WTC11 (cell line): ENCODE measurements at regions of chr19 and their contacts with region 1.

Region 1: GRCh38 chr19:47391510-47392223 is 27.7 kb downstream of the MEIS3 start:
- DNase-seq: peak; percentile 91
- ATAC-seq: peak; percentile 99
- H3K4me3 Mint-ChIP-seq: 0 out of 2 replicates have a peak overlapping the region, but pooled peaks have one; percentile 21
- H3K27ac Mint-ChIP-seq: peak overlapping the region; percentile 58
- H3K4me1 Mint-ChIP-seq: peaks cover 22% of the 10 kb centered on the region
- H3K27me3 Mint-ChIP-seq: peaks cover 14% of the 10 kb centered on the region
- CTCF ChIP-seq: peak; percentile 92

Region 2: DNA sequence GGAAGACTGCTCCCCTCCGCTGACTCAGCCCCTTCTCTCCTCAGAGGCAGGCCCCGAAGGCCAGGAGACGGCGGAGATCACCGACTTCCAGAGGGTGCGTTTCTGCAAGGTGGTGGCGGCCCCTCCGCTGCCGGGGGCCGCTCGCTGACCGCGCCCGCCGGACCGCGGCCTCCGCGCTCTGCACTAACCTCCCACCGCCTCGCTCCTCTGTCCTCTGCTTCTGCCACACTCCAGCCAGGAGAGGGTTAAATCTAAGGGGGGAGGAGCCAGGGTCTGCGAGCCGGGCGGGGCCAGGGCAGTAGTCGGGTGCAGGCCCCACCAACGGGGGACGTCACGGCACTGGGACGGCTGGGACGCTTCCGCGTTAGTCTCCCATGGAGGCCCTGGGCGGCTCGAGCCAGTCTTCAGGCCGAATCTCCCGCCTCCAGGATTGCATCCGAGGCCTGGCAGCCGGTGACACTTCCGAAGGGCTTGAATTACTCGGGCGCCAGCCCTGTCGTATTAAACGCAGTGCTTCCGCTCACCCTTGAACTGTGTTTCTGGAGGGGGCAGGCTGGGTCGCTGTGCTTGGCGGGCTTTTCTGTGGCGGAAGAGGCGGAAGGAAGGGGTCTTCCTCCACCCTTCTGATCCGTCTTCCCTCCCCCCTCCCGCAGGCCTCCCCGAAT is 118.2 kb before region 1 on chr19:
- CTCF ChIA-PET with region 1: interaction called, 19 read pairs
- POLR2A ChIA-PET with region 1: no interaction called
- DNase-seq: peak; percentile 93
- ATAC-seq: peak; percentile 63
- H3K4me3 Mint-ChIP-seq: peak overlapping the region; percentile 91
- H3K27ac Mint-ChIP-seq: peak overlapping the region; percentile 99
- H3K4me1 Mint-ChIP-seq: peaks cover 16% of the 10 kb centered on the region
- H3K27me3 Mint-ChIP-seq: peaks cover 18% of the 10 kb centered on the region
- CTCF ChIP-seq: no peak

Region 3: GRCh38 chr19:47296036-47296435 is 95.6 kb before region 1 on chr19:
- CTCF ChIA-PET with region 1: interaction called, 22 read pairs
- POLR2A ChIA-PET with region 1: no interaction called
- DNase-seq: peak; percentile 88
- ATAC-seq: peak; percentile 97
- H3K4me3 Mint-ChIP-seq: no peak overlapping the region
- H3K27ac Mint-ChIP-seq: no peak overlapping the region
- H3K4me1 Mint-ChIP-seq: peaks cover 7% of the 10 kb centered on the region
- H3K27me3 Mint-ChIP-seq: no peaks in the 10 kb centered on the region
- CTCF ChIP-seq: peak; percentile 80

Region 4: DNA sequence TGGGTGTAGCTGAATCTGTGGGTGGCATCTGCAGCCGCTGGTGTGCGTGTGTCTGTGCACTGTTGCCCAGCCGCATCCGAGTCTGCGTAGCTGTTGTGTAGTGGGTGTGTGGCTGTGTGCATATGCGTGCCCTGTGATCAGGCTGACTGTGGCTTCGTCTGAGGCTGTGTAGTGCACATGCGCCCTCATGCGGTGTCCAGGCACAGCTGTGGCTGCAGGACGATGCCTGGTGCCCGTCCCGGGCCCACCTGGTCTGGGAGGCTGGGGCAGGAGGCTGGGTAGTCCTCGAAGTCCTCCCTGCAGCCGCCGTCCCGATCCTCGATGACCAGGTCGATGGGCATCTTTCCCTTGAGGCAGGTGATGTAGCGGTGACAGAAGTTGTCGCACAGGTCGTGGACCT is 22.8 kb after region 1 on chr19:
- CTCF ChIA-PET with region 1: interaction called, 24 read pairs
- POLR2A ChIA-PET with region 1: no interaction called
- DNase-seq: peak; percentile 73
- ATAC-seq: peak; percentile 59
- H3K4me3 Mint-ChIP-seq: no peak overlapping the region
- H3K27ac Mint-ChIP-seq: no peak overlapping the region; the same call in 1 of the 2 replicates
- H3K4me1 Mint-ChIP-seq: peaks cover 28% of the 10 kb centered on the region
- H3K27me3 Mint-ChIP-seq: peaks cover 39% of the 10 kb centered on the region
- CTCF ChIP-seq: 0 out of 2 replicates have a peak, but pooled peaks have one; percentile 26

Region 5: GRCh38 chr19:47447470-47448359 is 56.0 kb after region 1 on chr19:
- CTCF ChIA-PET with region 1: interaction called, 14 read pairs
- POLR2A ChIA-PET with region 1: no interaction called
- DNase-seq: peak; percentile 99
- ATAC-seq: peak; percentile 89
- H3K4me3 Mint-ChIP-seq: peak overlapping the region; percentile 79
- H3K27ac Mint-ChIP-seq: peak overlapping the region; percentile 81
- H3K4me1 Mint-ChIP-seq: peaks cover 36% of the 10 kb centered on the region
- H3K27me3 Mint-ChIP-seq: peaks cover 56% of the 10 kb centered on the region
- CTCF ChIP-seq: no peak

Region 6: DNA sequence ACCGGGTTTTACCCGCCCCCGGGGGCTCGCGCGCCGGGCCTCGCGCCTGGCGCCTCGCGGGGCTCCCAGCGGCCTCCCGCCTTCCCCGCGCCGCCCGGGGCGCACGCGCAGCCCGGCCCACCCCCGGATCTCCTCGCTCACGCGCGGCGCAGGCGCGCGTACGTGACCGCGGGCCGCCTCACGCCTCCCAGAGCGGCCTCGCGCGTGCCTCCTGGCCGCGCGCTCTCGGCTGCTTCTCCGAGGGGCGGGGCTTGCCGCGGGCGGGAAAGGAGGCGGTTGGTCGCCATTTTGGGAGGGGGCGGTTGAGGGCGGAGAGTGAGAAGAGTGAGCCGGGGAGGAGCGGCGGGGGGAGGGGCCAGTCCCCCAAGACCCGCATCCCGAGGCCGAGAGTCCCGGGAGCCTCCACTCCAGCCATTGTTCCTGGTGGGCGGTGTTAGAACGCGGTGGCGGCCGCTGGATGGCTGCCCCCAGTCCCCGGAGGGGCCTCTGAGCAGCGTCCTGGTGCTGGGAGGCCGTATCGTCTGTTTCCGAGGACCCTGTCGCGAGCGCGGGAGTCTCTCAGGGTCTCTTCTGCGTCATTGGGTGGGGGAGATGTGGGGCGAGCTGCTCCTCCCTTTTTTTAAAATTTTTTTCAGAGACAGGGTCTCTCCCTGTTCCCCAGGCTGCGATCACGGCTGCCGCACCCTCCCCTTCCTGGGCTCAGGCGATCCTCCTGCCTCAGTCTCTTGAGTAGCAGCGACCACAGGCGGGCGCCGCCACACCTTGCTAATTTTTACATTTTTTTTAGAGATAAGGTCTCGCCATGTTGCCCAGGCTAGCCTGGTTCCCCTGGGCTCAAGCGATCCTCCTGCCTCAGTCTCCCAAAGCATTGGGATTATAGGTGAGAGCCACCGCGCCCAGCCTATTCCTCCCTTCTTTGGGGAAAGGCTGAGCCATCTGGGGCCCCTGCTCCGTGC is 181.7 kb after region 1 on chr19 and contains the start of gene ZNF541:
- CTCF ChIA-PET with region 1: no interaction called
- POLR2A ChIA-PET with region 1: no interaction called
- DNase-seq: peak; percentile 31
- ATAC-seq: no peak; the same call in 1 of the 2 replicates
- H3K4me3 Mint-ChIP-seq: no peak within 1 kb of the TSS
- H3K27ac Mint-ChIP-seq: no peak within 1 kb of the TSS
- H3K4me1 Mint-ChIP-seq: peaks cover 6% of the 10 kb centered on the region
- H3K27me3 Mint-ChIP-seq: no peaks in the 10 kb centered on the region; the same call in 1 of the 2 replicates
- CTCF ChIP-seq: no peak
- total RNA-seq, gene ZNF541: 0.07 to 0.09 TPM (median 0.09 TPM) in 3 replicates